K562 (cell line): ENCODE measurements at regions of chr4 and their contacts with region 1.

Region 1: DNA sequence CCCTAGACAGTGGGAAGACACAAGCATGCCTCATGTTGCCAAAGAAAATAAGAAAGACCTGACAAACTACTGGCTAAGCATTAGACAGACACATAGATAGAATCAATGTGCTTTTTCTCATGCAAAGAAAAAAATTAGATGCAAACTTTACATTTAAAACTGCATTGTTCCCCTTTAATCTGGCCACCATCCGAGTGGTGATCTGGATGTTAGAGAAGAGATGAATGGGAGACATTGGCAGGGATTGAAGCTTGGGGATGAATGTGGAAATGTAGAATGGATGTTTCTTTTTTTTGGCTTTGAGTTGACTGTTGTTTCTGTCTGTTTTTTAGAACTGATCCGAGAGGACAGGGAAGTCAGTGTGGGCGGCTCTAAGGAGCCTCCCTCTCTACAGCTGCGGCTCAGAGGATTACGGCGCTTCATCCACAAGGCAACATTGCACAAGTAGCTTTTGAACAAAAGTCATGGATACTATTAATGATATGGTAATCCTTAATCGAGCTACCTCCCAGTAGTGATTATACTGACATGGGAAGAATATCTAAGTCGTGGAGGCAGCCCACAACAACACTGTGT is 53.0 kb downstream of the HELT start:
- DNase-seq: no peak
- ATAC-seq: peak; percentile 33; the same call in 2 of the 3 replicates
- H3K4me3 ChIP-seq: no peak overlapping the region
- H3K27ac ChIP-seq: no peak overlapping the region
- H3K4me1 ChIP-seq: no peaks in the 10 kb centered on the region
- H3K27me3 ChIP-seq: peaks cover 19 to 25% of the 10 kb centered on the region in 2 experiments; a peak in 4 of 5 replicates
- CTCF ChIP-seq: no peak
- EP300 ChIP-seq: no peak
- POLR2A ChIP-seq: no peak
- RAD21 ChIP-seq: no peak

Region 2: GRCh38 chr4:185039508-185040273 is 31.6 kb before region 1 on chr4:
- CTCF ChIA-PET with region 1: no interaction called
- POLR2A ChIA-PET with region 1: no interaction called
- in situ Hi-C with region 1: no loop called
- intact Hi-C with region 1: no loop called
- DNase-seq: peak; percentile 70 to 75 (median 72)
- ATAC-seq: peak; percentile 90
- H3K4me3 ChIP-seq: no peak overlapping the region
- H3K27ac ChIP-seq: no peak overlapping the region
- H3K4me1 ChIP-seq: no peaks in the 10 kb centered on the region; a peak in 1 of 5 replicates
- H3K27me3 ChIP-seq: peaks cover 11 to 12% of the 10 kb centered on the region in 2 experiments
- CTCF ChIP-seq: peak; percentile 74 to 91 (median 78)
- EP300 ChIP-seq: no peak
- POLR2A ChIP-seq: no peak
- RAD21 ChIP-seq: peak; percentile 84 to 86

Region 3: GRCh38 chr4:185054876-185055275 is 16.4 kb before region 1 on chr4:
- CTCF ChIA-PET with region 1: no interaction called
- POLR2A ChIA-PET with region 1: interaction called, 4 read pairs
- in situ Hi-C with region 1: no loop called
- intact Hi-C with region 1: loop called (anchors 1 kb)
- DNase-seq: no peak
- ATAC-seq: no peak
- H3K4me3 ChIP-seq: no peak overlapping the region
- H3K27ac ChIP-seq: no peak overlapping the region
- H3K4me1 ChIP-seq: no peaks in the 10 kb centered on the region; a peak in 1 of 5 replicates
- H3K27me3 ChIP-seq: peaks cover 28 to 52% of the 10 kb centered on the region in 2 experiments
- CTCF ChIP-seq: no peak
- EP300 ChIP-seq: no peak
- POLR2A ChIP-seq: no peak
- RAD21 ChIP-seq: no peak